AG04450 (cell line): ENCODE measurements at regions of chr18 and their contacts with region 1.

Region 1: GRCh38 chr18:63924551-63924950 is 16.8 kb downstream of the SERPINB10 start:
- DNase-seq: no peak
- H3K4me3 ChIP-seq: no peak overlapping the region
- H3K27ac ChIP-seq: no peak overlapping the region
- H3K27me3 ChIP-seq: no peaks in the 10 kb centered on the region
- CTCF ChIP-seq: no peak

Region 2: DNA sequence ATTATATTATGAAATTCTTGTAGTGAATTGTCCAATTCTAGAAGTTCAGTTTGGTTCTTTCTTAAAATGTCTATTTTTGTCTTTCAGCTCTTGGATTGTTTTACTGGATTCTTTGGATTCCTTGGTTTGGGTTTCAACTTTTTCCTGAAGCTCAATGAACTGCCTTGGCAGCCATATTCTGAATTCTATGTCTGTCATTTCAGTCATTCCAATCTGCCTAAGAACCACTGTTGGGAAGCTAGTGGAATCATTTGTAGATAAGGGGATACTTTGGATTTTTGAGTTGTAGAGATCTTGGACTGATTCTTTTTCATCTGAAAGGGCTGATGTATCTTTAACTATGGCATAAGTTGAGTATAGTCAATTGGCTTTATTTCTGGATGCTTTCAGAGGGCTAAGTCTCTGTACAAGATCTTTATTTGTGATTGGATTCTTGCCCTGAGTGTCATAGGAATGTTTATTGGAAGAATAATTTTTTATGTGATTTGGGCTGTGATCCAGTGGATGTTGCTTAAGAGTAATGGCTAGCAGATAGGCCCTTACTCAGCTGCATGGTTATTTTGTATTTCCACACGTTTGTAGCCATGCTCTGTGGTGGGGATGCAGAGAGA is 107.0 kb before region 1 on chr18:
- CTCF ChIA-PET with region 1: no interaction called
- POLR2A ChIA-PET with region 1: no interaction called
- DNase-seq: no peak
- H3K4me3 ChIP-seq: no peak overlapping the region
- H3K27ac ChIP-seq: no peak overlapping the region
- H3K27me3 ChIP-seq: no peaks in the 10 kb centered on the region
- CTCF ChIP-seq: no peak

Region 3: GRCh38 chr18:63936156-63936931 is 11.8 kb after region 1 on chr18:
- CTCF ChIA-PET with region 1: interaction called, 15 read pairs
- POLR2A ChIA-PET with region 1: interaction called, 3 read pairs
- DNase-seq: no peak
- H3K4me3 ChIP-seq: peak overlapping the region; percentile 68
- H3K27ac ChIP-seq: no peak overlapping the region
- H3K27me3 ChIP-seq: peaks cover 12% of the 10 kb centered on the region
- CTCF ChIP-seq: peak; percentile 70